ENCODE measurements at regions of chr9 and their contacts with region 1.

Region 1: DNA sequence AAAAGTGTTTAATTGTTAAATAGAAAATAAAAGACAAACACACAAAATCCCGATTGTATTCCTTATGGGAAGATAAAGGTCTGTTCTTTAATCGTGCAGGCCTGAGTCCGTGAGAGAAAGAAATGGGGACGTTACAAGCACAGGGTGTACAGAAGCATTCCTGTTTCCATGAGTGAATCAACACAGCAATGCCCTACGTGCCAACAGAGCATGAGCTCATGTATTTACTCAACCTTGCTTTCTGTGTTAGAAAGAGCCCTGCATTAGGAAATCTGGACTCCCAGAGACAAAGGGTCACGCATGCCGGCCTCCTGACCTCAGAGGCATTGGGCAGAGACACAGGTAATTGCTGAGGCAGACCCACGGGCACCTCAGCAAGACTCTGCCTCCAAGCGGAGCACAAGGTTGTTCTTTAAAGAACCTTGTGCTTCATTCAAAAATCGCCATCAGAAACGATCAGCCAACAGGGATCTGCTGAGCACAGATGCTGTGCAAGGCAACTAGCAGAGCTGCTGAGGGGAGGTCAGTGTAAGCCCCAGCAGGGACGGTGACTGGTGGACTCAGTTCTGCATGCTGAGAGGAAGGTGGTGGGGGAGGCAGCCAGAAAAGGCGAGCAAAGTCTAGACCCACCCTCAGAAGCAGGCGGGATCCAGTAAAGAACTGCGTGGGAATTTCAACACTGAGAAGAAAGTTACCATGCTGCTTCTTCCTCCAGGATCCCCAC is 101.0 kb downstream of the TLE1 start:
- DNase-seq: peak; percentile 99
- ATAC-seq: peak; percentile 96
- H3K4me3 ChIP-seq: peak overlapping the region in 2 of 3 experiments; percentile 11 to 47; a peak in 3 of 6 replicates
- H3K27ac ChIP-seq: peak overlapping the region; percentile 99
- H3K4me1 ChIP-seq: peaks cover 96% of the 10 kb centered on the region
- H3K27me3 ChIP-seq: no peaks in the 10 kb centered on the region
- CTCF ChIP-seq: peak; percentile 52
- EP300 ChIP-seq: peak; percentile 97 to 98
- POLR2A ChIP-seq: peak; percentile 40 to 47; a peak in 1 of 4 replicates
- RAD21 ChIP-seq: peak; percentile 66; the same call in 1 of the 2 replicates

Region 2: DNA sequence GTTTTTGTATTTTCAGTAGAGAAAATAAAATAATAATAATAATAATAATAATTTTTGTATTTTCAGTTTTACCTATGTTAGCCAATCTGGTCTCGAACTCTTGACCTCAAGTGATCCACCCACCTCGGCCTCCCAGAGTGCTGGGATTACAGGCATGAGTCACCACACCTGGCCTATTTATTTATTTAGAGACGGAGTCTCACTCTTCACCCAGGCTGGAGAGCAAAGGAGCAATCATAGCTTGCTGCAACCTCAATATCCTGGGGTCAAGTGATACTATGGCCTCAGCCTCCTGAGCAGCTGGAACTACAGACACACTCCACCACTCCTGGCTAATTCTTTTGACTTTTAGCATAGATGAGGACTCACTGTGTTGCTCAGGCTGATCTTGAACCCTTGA is 66.4 kb before region 1 on chr9:
- CTCF ChIA-PET with region 1: interaction called, 3 read pairs
- POLR2A ChIA-PET with region 1: interaction called, 15 read pairs
- in situ Hi-C with region 1: no loop called
- intact Hi-C with region 1: loop called (anchors 2 kb)
- DNase-seq: peak; percentile 57
- ATAC-seq: peak; percentile 52
- H3K4me3 ChIP-seq: no peak overlapping the region
- H3K27ac ChIP-seq: no peak overlapping the region
- H3K4me1 ChIP-seq: peaks cover 45% of the 10 kb centered on the region
- H3K27me3 ChIP-seq: no peaks in the 10 kb centered on the region
- CTCF ChIP-seq: no peak
- EP300 ChIP-seq: no peak
- POLR2A ChIP-seq: no peak
- RAD21 ChIP-seq: no peak

Region 3: DNA sequence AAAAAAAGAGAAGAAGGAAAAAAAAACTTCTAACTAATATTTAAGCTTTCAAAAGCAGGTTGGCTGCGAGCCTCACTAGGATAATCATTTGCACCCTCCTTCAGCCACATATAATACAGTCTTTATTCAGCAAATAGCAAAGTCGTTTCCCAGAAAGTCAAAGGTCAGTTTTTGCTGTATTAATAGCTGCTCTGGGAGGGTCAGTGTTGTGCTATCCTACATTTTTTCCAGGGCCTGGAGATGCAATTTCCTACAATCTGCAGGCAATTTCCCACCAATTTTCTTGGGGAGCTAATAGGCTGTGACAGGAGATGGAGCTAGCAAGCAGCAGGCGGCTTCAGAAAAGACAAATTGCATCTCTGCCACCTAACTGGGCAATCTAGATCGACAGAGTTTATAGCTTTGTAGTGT is 35.7 kb before region 1 on chr9:
- CTCF ChIA-PET with region 1: no interaction called
- POLR2A ChIA-PET with region 1: interaction called, 7 read pairs
- in situ Hi-C with region 1: no loop called
- intact Hi-C with region 1: loop called (anchors 5 kb)
- DNase-seq: peak; percentile 65
- ATAC-seq: peak; percentile 75
- H3K4me3 ChIP-seq: no peak overlapping the region
- H3K27ac ChIP-seq: no peak overlapping the region
- H3K4me1 ChIP-seq: peaks cover 70% of the 10 kb centered on the region
- H3K27me3 ChIP-seq: no peaks in the 10 kb centered on the region
- CTCF ChIP-seq: no peak; the same call in 1 of the 2 replicates
- EP300 ChIP-seq: no peak
- POLR2A ChIP-seq: no peak
- RAD21 ChIP-seq: no peak

Region 4: DNA sequence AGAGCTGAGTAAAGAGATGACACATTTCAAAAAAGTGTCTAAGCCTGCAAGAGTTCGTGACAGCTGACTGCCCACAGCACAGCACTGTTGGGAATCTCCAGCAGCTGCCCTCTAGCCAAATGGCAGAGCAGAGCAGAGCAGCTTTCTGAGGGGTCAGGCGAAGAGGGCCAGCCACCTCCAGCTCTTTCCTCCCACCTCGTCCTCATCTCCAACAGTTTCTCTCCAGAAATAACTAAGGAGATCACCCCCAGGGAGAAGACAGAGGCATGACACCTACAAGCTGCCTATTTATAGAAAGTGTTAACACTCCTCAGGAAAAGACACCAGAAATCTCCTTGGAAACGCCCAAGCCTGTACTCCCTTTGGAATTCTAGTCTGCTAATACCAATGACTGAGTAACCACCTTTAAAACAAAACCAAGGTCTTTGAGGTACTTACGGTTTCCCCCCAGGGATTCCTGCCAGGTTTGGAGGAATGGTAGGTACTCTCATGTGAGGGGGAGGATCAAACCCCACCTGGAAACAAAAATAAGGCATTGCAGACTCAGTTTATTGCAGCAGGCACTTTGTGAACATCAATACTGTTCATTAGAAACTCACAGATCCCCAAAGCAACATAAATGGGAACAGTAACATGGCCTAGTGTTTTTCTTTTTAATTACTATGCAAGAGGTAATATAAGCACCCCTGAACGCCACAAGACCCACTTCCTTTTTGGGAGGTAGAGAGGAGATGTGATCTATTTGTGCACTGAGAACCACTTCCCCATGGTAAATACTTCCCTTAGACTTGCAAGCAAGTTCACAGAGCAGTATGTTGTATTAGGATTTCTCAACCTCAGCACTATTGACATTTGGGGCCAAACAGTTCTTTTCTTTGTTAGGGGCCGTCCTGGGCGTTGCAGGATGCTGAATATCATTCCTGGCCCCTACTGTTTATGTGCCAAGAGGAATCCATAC is 21.8 kb after region 1 on chr9:
- CTCF ChIA-PET with region 1: no interaction called
- POLR2A ChIA-PET with region 1: interaction called, 8 read pairs
- in situ Hi-C with region 1: no loop called
- intact Hi-C with region 1: loop called (anchors 2 kb)
- DNase-seq: peak; percentile 94
- ATAC-seq: peak; percentile 97
- H3K4me3 ChIP-seq: peak overlapping the region in 1 of 3 experiments; percentile 11; a peak in 1 of 6 replicates
- H3K27ac ChIP-seq: peak overlapping the region; percentile 67
- H3K4me1 ChIP-seq: peaks cover 78% of the 10 kb centered on the region
- H3K27me3 ChIP-seq: no peaks in the 10 kb centered on the region
- CTCF ChIP-seq: peak; percentile 11; the same call in 1 of the 2 replicates
- EP300 ChIP-seq: peak in 1 of 2 experiments; percentile 96; a peak in 2 of 4 replicates
- POLR2A ChIP-seq: no peak
- RAD21 ChIP-seq: no peak

Region 5: DNA sequence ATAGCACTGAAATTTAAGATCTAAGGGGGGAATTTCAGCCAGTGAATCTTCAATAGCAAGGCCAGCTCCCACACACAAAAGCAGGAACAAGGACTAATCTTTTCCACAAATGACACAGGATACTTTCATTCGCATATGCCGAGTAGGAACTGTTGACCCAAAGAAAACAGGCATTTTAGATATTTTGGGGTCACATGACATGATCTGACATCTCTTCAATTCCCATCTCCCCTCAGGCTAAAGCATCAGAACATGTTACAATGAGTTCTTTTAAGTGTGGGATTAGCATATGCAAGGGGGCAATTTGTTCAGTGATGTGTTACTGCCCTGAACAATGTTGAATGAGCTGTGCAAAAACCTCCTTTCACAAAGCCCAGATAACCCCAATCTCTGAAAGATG is 32.8 kb after region 1 on chr9:
- CTCF ChIA-PET with region 1: no interaction called
- POLR2A ChIA-PET with region 1: no interaction called
- in situ Hi-C with region 1: no loop called
- intact Hi-C with region 1: no loop called
- DNase-seq: no peak
- ATAC-seq: no peak
- H3K4me3 ChIP-seq: no peak overlapping the region
- H3K27ac ChIP-seq: no peak overlapping the region
- H3K4me1 ChIP-seq: 0 out of 2 replicates have a peak, but pooled peaks cover 2% of the 10 kb centered on the region
- H3K27me3 ChIP-seq: no peaks in the 10 kb centered on the region
- CTCF ChIP-seq: no peak
- EP300 ChIP-seq: no peak
- POLR2A ChIP-seq: no peak
- RAD21 ChIP-seq: no peak

Region 6: GRCh38 chr9:81699086-81699485 is 110.8 kb after region 1 on chr9:
- CTCF ChIA-PET with region 1: no interaction called
- POLR2A ChIA-PET with region 1: no interaction called
- in situ Hi-C with region 1: no loop called
- intact Hi-C with region 1: no loop called
- DNase-seq: no peak
- ATAC-seq: no peak
- H3K4me3 ChIP-seq: no peak overlapping the region
- H3K27ac ChIP-seq: no peak overlapping the region
- H3K4me1 ChIP-seq: peaks cover 8% of the 10 kb centered on the region
- H3K27me3 ChIP-seq: peaks cover 0 to 8% of the 10 kb centered on the region in 2 experiments; a peak in 2 of 5 replicates
- CTCF ChIP-seq: no peak
- EP300 ChIP-seq: no peak
- POLR2A ChIP-seq: no peak
- RAD21 ChIP-seq: no peak

Measured in HepG2 (cell line).